ENCODE measurements at regions of chr12 and their contacts with region 1.

Region 1: DNA sequence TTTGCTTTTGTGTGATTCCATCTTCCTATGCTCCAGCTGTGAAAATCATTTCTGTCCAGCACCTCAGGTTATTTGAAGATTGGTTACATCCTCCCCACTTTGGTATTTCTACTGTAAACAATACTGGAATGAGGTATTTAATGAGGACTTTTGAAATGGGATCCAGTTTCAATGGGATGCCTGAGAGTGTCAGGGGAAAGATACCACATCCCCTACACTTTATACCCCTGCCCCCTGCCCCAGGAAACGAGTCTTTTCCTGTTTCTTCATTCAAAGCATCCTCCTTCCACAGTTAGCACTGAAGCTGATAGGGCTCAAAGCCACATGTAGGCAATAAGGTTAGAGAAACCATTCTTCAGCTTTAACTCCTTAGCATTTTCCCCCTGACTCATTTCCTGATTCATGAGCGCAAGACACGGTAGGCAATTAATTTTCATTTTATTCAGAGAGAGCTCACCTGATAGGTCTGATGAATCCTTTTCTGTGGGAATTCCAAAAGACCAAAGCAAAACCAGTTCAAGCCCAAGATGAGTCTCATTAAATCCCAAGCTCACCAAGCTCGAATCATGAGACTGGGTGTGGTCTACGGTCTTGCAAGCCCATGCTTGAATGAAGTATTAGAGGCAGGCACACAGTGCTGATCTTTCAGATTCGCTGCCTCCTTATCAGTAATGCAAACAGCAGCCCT is 143.6 kb upstream of the CRY1 start:
- DNase-seq: peak; percentile 54
- ATAC-seq: peak; percentile 46
- H3K4me3 ChIP-seq: no peak overlapping the region
- H3K27ac ChIP-seq: no peak overlapping the region
- H3K4me1 ChIP-seq: no peaks in the 10 kb centered on the region; the same call in 1 of the 2 replicates
- H3K27me3 ChIP-seq: peaks cover 4% of the 10 kb centered on the region
- CTCF ChIP-seq: no peak
- POLR2A ChIP-seq: no peak
- RAD21 ChIP-seq: no peak

Region 2: GRCh38 chr12:107225635-107226034 is 11.3 kb before region 1 on chr12:
- CTCF ChIA-PET with region 1: interaction called, 10 read pairs
- POLR2A ChIA-PET with region 1: interaction called, 18 read pairs
- dilution Hi-C with region 1: no loop called
- in situ Hi-C with region 1: no loop called
- intact Hi-C with region 1: no loop called
- DNase-seq: peak; percentile 42
- ATAC-seq: peak; percentile 42
- H3K4me3 ChIP-seq: no peak overlapping the region
- H3K27ac ChIP-seq: no peak overlapping the region
- H3K4me1 ChIP-seq: peaks cover 4% of the 10 kb centered on the region
- H3K27me3 ChIP-seq: peaks cover 5% of the 10 kb centered on the region
- CTCF ChIP-seq: no peak
- POLR2A ChIP-seq: no peak
- RAD21 ChIP-seq: no peak

Region 3: GRCh38 chr12:107458163-107458562 is 221.2 kb after region 1 on chr12:
- CTCF ChIA-PET with region 1: no interaction called
- POLR2A ChIA-PET with region 1: no interaction called
- dilution Hi-C with region 1: no loop called
- in situ Hi-C with region 1: no loop called
- intact Hi-C with region 1: no loop called
- DNase-seq: no peak
- ATAC-seq: no peak
- H3K4me3 ChIP-seq: no peak overlapping the region
- H3K27ac ChIP-seq: no peak overlapping the region
- H3K4me1 ChIP-seq: peaks cover 9% of the 10 kb centered on the region
- H3K27me3 ChIP-seq: no peaks in the 10 kb centered on the region
- CTCF ChIP-seq: no peak
- POLR2A ChIP-seq: no peak
- RAD21 ChIP-seq: no peak

Region 4: DNA sequence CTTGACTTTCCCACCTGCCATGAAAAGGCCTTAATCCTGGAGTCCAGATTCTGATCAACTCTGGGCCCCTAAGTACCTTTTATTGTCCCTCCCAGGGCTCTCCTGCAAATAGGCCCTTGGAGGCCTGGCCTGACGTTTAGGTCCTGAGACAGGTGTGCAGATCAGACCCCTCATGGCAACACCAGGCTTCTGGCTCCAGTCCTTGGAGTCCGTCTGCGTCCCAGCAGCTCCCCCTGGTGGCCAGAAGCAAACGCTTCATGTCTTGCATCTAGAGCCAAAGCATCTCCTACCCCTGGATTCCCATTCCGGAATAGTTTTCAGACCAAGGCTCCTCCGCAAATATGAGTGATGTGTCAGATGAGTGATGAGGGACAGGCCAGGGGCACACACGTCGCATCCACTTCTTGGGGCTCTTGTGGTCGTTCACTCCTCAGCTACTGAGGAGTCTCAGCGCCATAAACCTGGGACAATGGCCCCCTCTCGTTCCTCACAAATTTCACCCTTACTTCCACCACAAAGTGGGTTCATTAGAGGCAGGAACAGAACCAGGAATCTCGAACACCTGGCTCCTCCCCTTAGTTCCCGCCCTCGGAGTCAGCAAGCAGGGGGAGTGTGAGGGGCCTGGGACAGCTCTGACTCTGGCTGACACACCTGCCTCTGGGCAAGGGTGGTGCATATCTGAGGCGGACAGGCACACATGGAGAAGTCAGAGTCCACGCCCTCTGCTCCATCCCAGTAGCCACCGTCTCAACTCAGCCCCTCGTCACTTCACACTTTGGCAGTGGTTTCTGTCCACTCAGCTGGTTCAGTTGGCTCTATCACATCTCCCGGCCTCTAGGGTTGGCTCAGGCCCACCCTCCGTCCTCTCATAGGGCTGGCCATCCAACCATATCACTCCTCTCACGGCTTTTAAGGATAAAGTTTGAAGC is 370.8 kb after region 1 on chr12:
- CTCF ChIA-PET with region 1: no interaction called
- POLR2A ChIA-PET with region 1: no interaction called
- dilution Hi-C with region 1: no loop called
- in situ Hi-C with region 1: no loop called
- intact Hi-C with region 1: no loop called
- DNase-seq: peak; percentile 70
- ATAC-seq: peak; percentile 79
- H3K4me3 ChIP-seq: no peak overlapping the region
- H3K27ac ChIP-seq: no peak overlapping the region
- H3K4me1 ChIP-seq: no peaks in the 10 kb centered on the region; the same call in 1 of the 2 replicates
- H3K27me3 ChIP-seq: no peaks in the 10 kb centered on the region
- CTCF ChIP-seq: peak; percentile 93
- POLR2A ChIP-seq: no peak
- RAD21 ChIP-seq: peak; percentile 96